ENCODE measurements at regions of chr10 and their contacts with region 1.

Region 1: GRCh38 chr10:4813023-4813422 is 13.0 kb upstream of the AKR1E2 start:
- DNase-seq: no peak
- H3K4me3 ChIP-seq: no peak overlapping the region
- H3K27ac ChIP-seq: no peak overlapping the region
- H3K4me1 ChIP-seq: peaks cover 0 to 18% of the 10 kb centered on the region in 2 donors
- H3K27me3 ChIP-seq: no peaks in the 10 kb centered on the region
- CTCF ChIP-seq: no peak
- POLR2A ChIP-seq: no peak

Region 2: DNA sequence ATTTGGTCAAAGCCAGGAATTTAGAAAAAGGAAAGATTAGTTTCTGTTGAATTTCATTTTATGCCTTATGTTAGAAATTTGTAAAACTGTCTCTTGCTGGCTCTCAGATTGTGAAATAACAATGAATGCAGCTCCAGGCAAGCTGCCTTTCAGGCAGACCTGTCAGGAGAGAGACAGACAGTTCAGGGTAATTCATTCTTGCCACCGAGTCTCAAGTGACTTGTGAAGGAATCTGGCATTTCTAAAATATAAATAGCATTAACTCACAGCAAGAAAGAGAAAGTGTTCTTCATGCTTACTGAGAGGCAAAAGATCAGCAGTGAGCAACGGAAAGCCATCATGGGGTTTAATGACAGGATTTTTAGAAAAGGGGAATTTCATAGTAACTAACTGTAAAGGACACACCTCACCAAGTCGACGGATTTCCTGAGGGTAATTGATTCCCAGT is 429.3 kb before region 1 on chr10:
- intact Hi-C with region 1: no loop called
- DNase-seq: no peak
- H3K4me3 ChIP-seq: no peak overlapping the region
- H3K27ac ChIP-seq: no peak overlapping the region
- H3K4me1 ChIP-seq: no peaks in the 10 kb centered on the region
- H3K27me3 ChIP-seq: no peaks in the 10 kb centered on the region
- CTCF ChIP-seq: no peak
- POLR2A ChIP-seq: no peak

Region 3: DNA sequence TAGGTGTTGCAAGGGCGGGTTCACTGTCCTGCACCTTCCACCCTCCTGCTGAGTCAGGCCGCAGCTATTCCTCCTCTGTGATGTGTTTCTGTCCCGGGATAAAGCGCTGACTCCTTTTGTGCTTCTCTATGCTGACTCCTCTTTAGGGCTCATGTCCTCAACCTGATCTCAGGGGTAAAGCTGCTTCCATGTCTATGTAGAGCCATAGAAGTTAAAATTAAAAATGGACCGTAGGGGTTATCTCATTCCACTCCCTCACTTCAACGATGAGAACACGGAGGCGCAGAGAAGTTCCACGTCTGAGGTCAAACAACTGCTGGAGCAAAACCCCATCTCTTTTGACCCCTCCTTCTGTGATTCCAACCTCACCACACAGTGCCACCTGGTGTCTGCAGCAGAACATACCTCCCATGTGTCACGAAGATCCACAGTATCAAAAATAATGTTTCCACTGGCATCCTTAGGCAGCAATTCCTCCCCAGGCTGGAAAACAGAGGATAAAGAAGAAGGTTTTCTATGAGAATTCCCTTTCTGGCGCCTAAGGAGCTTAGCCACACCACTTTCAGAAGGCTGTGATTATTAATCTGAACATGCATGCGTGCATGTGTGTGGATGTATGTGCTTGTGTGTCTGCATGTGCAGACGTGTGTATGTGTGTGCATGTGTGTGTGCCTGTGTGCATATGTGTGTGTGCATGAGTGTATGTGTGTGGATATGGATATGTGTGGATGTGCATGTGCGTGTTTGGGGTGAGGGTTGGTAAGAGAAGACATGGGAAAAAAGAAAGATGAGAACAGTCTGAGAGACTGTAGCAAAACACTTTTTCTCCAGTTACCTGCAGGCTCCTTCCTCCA is 470.5 kb after region 1 on chr10:
- intact Hi-C with region 1: loop called (anchors 10 kb)
- DNase-seq: peak; percentile 64 to 78
- H3K4me3 ChIP-seq: no peak overlapping the region
- H3K27ac ChIP-seq: no peak overlapping the region
- H3K4me1 ChIP-seq: no peaks in the 10 kb centered on the region
- H3K27me3 ChIP-seq: no peaks in the 10 kb centered on the region
- CTCF ChIP-seq: peak in 5 of 6 experiments; percentile 42 to 82 (median 76)
- POLR2A ChIP-seq: no peak